GM12878 (cell line): ENCODE measurements at regions of chr7 and their contacts with region 1.

Region 1: GRCh38 chr7:50304158-50304910 is at the start of gene IKZF1:
- DNase-seq: no peak
- ATAC-seq: peak; percentile 41
- H3K4me3 ChIP-seq: peak within 1 kb of the TSS; percentile 79
- H3K27ac ChIP-seq: peak within 1 kb of the TSS; percentile 67
- H3K4me1 ChIP-seq: peaks cover 10% of the 10 kb centered on the region
- H3K27me3 ChIP-seq: no peaks in the 10 kb centered on the region
- CTCF ChIP-seq: no peak; a peak in 1 of 6 replicates
- EP300 ChIP-seq: no peak
- POLR2A ChIP-seq: peak; percentile 33
- RAD21 ChIP-seq: no peak
- polyA plus RNA-seq, gene IKZF1: 27.2 to 29.8 TPM

Region 2: DNA sequence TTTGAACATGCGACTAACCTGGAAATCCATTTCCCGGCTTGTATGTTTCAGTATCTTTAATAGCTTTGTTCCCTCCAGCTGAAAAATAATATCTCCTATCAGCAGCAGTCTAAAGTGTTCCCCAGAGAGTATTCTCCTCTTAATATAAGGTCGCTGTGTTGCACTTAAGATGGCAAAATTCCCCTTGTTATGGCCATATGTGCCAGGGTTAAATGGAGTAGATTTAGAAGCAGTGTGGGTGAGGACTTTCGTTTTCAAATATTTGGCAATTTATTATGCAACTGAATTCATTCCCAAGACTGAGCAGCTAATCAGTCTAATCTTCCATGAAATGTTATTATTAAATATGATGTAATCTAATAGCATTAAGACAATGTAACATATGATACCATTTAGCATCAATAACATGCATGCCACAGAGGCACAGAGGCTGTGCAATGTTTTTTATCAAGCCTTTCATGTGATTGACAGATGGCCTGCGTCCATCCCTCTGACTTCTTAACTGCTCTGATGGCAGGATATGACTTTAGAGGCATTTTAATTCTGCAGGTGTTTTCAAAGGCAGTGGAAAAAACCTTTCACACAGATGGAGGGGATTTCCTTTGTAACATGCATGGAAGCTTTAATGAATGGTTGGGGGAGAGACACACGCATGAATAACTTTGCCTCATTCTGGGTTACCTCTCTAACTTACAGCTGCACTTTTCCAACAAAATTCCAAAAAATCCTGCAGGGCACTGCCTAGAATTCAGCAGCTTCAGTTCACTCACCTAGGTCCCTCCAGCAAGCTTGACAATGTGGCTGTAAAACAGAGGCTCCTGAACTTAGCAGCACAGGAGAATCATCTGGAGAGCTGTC is 156.2 kb before region 1 on chr7:
- CTCF ChIA-PET with region 1: interaction called, 12 read pairs
- POLR2A ChIA-PET with region 1: interaction called, 4 read pairs
- RAD21 ChIA-PET with region 1: interaction called, 14 read pairs
- SMC1A ChIA-PET with region 1: interaction called, 25 read pairs
- in situ Hi-C with region 1: no loop called
- intact Hi-C with region 1: loop called (anchors 2 kb)
- DNase-seq: peak; percentile 76
- ATAC-seq: peak; percentile 70
- H3K4me3 ChIP-seq: no peak overlapping the region
- H3K27ac ChIP-seq: peak overlapping the region; percentile 59
- H3K4me1 ChIP-seq: peaks cover 46% of the 10 kb centered on the region
- H3K27me3 ChIP-seq: no peaks in the 10 kb centered on the region
- CTCF ChIP-seq: no peak
- EP300 ChIP-seq: peak; percentile 52 to 85; a peak in 3 of 4 replicates
- POLR2A ChIP-seq: no peak
- RAD21 ChIP-seq: no peak

Region 3: DNA sequence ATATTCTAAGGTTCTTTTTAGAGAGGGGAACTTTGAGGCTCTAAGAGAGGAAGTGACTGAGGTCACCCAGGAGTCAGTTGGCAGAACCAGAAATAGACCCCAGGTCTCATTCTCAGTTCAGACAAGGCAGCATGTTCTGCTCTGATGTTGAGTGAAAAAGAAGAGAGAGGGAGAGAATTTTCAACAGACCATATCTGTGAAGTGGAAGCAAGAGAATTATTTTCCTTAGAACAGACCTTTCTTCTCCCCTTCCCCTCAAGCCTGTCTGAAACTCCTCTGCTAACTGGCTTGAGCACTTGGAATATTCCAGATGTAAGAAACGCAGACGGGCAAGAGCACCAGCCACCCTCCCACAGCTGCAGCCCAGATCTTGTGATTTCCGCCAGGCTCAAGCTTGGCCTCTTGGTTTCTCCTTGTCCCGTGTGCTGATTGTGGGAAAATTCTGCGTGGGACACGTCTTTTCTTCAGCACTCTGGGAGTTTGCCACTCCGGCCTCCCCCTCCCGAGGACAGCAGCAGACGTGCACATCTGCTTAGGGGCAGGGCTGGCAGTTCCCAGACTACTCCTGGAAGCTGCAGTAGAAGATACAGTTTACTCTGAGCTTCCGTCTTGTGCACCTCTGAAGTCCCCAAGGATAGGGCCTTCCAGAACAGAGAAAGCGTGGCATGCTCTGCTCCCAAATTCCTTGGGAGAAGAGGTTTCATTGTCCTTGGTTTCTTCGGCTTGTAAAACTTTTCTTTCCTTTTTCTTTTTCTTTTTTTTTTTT is 22.5 kb before region 1 on chr7:
- CTCF ChIA-PET with region 1: interaction called, 250 read pairs
- POLR2A ChIA-PET with region 1: interaction called, 165 read pairs
- RAD21 ChIA-PET with region 1: interaction called, 293 read pairs
- SMC1A ChIA-PET with region 1: interaction called, 356 read pairs
- in situ Hi-C with region 1: no loop called
- intact Hi-C with region 1: no loop called
- DNase-seq: peak; percentile 81
- ATAC-seq: peak; percentile 88
- H3K4me3 ChIP-seq: peak overlapping the region; percentile 69
- H3K27ac ChIP-seq: peak overlapping the region; percentile 82
- H3K4me1 ChIP-seq: peaks cover 49% of the 10 kb centered on the region
- H3K27me3 ChIP-seq: no peaks in the 10 kb centered on the region
- CTCF ChIP-seq: no peak
- EP300 ChIP-seq: peak; percentile 35 to 72; a peak in 1 of 4 replicates
- POLR2A ChIP-seq: peak; percentile 54; the same call in 1 of the 2 replicates
- RAD21 ChIP-seq: peak; percentile 29; the same call in 1 of the 2 replicates

Region 4: GRCh38 chr7:50327443-50327842 is 23.1 kb after region 1 on chr7:
- CTCF ChIA-PET with region 1: interaction called, 14 read pairs
- POLR2A ChIA-PET with region 1: interaction called, 5 read pairs
- RAD21 ChIA-PET with region 1: interaction called, 45 read pairs
- SMC1A ChIA-PET with region 1: interaction called, 131 read pairs
- in situ Hi-C with region 1: no loop called
- intact Hi-C with region 1: no loop called
- DNase-seq: no peak
- ATAC-seq: peak; percentile 80
- H3K4me3 ChIP-seq: no peak overlapping the region
- H3K27ac ChIP-seq: peak overlapping the region; percentile 44
- H3K4me1 ChIP-seq: peaks cover 44% of the 10 kb centered on the region
- H3K27me3 ChIP-seq: no peaks in the 10 kb centered on the region
- CTCF ChIP-seq: no peak; a peak in 1 of 6 replicates
- EP300 ChIP-seq: peak in 1 of 2 experiments; percentile 83; a peak in 2 of 4 replicates
- POLR2A ChIP-seq: no peak
- RAD21 ChIP-seq: peak; percentile 19; the same call in 1 of the 2 replicates

Region 5: DNA sequence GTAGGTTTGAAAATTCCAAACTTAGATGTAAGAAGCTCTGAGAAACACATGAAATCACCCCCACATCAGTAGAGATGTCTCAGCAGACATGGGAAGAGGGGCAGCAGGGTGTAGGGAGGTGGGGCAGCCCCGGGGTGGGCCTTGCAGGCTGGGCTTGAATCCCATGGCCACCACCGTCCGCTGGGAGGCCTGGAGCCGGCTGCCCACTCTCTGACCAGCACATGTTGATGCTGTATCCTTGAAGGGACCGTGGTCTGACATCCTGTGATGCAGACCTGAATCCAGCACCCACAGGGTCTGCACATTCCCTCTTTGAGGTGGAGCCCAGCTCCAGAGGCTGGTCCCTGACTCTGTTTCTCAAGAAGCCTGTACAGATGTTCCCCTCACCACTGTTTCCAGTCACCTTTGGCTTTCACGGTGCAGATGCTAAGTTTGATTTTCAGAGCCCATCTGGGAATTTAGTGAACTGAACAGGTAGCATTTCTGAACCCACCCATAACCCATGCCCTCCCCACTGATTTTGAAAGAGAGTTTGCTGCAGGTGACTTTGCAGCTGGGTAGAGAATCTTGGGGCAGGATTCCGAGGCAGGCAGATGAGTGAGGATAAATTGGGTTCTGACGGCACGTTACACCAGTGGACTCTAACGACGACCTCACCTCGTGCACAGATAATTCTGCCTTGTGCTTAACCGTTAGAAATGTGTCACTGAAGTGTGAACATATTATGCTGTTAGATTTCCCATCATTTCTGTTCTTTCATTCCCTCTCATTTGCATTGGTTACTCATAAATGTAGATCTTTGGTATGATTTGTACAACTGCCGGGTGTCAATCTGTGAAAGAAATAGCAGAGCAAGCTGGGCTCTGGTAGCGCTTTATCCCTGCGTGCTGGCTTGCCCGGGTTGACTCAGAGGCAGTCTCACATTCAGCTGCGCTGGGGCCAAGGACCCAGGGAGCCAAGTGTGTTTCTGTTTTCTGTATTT is 45.9 kb after region 1 on chr7:
- CTCF ChIA-PET with region 1: no interaction called
- POLR2A ChIA-PET with region 1: interaction called, 4 read pairs
- RAD21 ChIA-PET with region 1: interaction called, 42 read pairs
- SMC1A ChIA-PET with region 1: interaction called, 34 read pairs
- in situ Hi-C with region 1: no loop called
- intact Hi-C with region 1: loop called (anchors 2 kb)
- DNase-seq: peak; percentile 84
- ATAC-seq: peak; percentile 90
- H3K4me3 ChIP-seq: no peak overlapping the region
- H3K27ac ChIP-seq: peak overlapping the region; percentile 86
- H3K4me1 ChIP-seq: peaks cover 31% of the 10 kb centered on the region
- H3K27me3 ChIP-seq: no peaks in the 10 kb centered on the region
- CTCF ChIP-seq: no peak
- EP300 ChIP-seq: peak; percentile 78 to 84
- POLR2A ChIP-seq: peak; percentile 44; the same call in 1 of the 2 replicates
- RAD21 ChIP-seq: 0 out of 2 replicates have a peak, but pooled peaks have one; percentile 24